ENCODE measurements at regions of chr12 and their contacts with region 1.

Region 1: GRCh38 chr12:133130038-133130807 is at the starts of genes ZNF10 and ZNF891:
- DNase-seq: peak; percentile 99
- ATAC-seq: peak; percentile 85
- H3K4me3 ChIP-seq: peak within 1 kb of the TSS; percentile 66 to 86 (median 77)
- H3K4me3 Mint-ChIP-seq: peak within 1 kb of the TSS; percentile 100
- H3K27ac ChIP-seq: peak within 1 kb of the TSS; percentile 98 to 99
- H3K27ac Mint-ChIP-seq: peak within 1 kb of the TSS; percentile 100
- H3K4me1 ChIP-seq: peaks cover 4 to 13% of the 10 kb centered on the region in 2 donors
- H3K4me1 Mint-ChIP-seq: peaks cover 18% of the 10 kb centered on the region
- H3K27me3 ChIP-seq: no peaks in the 10 kb centered on the region
- H3K27me3 Mint-ChIP-seq: no peaks in the 10 kb centered on the region
- CTCF ChIP-seq: no peak
- total RNA-seq, gene ZNF10: 20.0 and 20.9 TPM in 2 replicates
- total RNA-seq, gene ZNF891: 6.8 and 7.7 TPM in 2 replicates

Region 2: GRCh38 chr12:132771126-132771838 is 358.9 kb before region 1 on chr12:
- CTCF ChIA-PET with region 1: no interaction called
- POLR2A ChIA-PET with region 1: no interaction called
- intact Hi-C with region 1: loop called (anchors 5 kb)
- DNase-seq: peak; percentile 87
- ATAC-seq: peak; percentile 56
- H3K4me3 ChIP-seq: peak overlapping the region in 4 of 5 experiments; percentile 7 to 31 (median 16)
- H3K4me3 Mint-ChIP-seq: peak overlapping the region; percentile 69
- H3K27ac ChIP-seq: peak overlapping the region; percentile 87 to 89
- H3K27ac Mint-ChIP-seq: peak overlapping the region; percentile 88
- H3K4me1 ChIP-seq: peaks cover 60 to 76% of the 10 kb centered on the region in 2 donors
- H3K4me1 Mint-ChIP-seq: peaks cover 61% of the 10 kb centered on the region
- H3K27me3 ChIP-seq: no peaks in the 10 kb centered on the region
- H3K27me3 Mint-ChIP-seq: no peaks in the 10 kb centered on the region
- CTCF ChIP-seq: no peak

Region 3: DNA sequence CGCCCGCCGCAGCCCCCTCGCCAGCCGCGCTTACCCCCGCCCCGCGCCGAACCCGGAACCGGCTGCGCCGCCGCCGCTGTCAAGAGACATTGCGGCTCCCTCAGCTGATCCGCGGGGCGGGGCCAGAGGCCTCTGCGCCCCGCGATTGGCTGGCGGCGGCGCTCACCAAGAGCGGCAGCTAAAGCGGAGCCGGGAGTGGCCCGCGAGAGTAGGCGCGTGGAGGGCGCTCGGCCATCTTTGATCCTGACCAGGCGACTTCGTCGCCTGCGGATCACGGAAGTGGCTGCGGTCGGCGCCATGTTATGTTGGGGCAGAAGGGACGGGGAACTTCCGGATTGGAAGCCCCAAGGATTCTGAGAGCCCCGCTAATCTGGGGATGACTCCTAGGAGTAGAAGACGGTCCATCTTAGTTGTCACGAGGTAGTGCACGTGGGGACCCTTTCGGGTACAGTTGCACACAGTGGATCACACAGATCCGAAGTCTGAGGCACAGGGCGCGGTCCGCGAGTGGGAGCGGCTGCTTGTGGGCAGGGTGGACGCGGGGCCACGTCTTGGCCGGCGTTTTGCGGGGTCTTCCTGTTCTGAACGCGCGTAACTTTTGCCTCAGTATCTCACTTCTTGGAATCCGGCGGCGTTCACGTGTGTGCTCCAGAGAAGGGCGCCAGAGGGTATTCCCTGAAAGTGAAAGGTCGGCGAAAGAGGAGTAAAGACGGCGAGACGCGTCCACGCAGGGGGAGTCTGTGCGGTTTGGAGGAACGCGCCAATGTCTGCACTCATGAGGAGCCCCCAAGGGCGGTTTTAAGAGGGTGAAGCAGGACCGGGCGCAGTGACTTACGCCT is 242.5 kb before region 1 on chr12 and contains the start of gene CHFR:
- CTCF ChIA-PET with region 1: no interaction called
- POLR2A ChIA-PET with region 1: no interaction called
- intact Hi-C with region 1: loop called (anchors 1 kb)
- DNase-seq: peak; percentile 98
- ATAC-seq: peak; percentile 98
- H3K4me3 ChIP-seq: peak within 1 kb of the TSS; percentile 69 to 90 (median 77)
- H3K4me3 Mint-ChIP-seq: peak within 1 kb of the TSS; percentile 99
- H3K27ac ChIP-seq: peak within 1 kb of the TSS; percentile 92 to 98
- H3K27ac Mint-ChIP-seq: peak within 1 kb of the TSS; percentile 100
- H3K4me1 ChIP-seq: peaks cover 11 to 16% of the 10 kb centered on the region in 2 donors
- H3K4me1 Mint-ChIP-seq: peaks cover 30% of the 10 kb centered on the region
- H3K27me3 ChIP-seq: no peaks in the 10 kb centered on the region
- H3K27me3 Mint-ChIP-seq: peaks cover 6% of the 10 kb centered on the region
- CTCF ChIP-seq: no peak
- total RNA-seq, gene CHFR: 92.5 and 105 TPM in 2 replicates

Region 4: DNA sequence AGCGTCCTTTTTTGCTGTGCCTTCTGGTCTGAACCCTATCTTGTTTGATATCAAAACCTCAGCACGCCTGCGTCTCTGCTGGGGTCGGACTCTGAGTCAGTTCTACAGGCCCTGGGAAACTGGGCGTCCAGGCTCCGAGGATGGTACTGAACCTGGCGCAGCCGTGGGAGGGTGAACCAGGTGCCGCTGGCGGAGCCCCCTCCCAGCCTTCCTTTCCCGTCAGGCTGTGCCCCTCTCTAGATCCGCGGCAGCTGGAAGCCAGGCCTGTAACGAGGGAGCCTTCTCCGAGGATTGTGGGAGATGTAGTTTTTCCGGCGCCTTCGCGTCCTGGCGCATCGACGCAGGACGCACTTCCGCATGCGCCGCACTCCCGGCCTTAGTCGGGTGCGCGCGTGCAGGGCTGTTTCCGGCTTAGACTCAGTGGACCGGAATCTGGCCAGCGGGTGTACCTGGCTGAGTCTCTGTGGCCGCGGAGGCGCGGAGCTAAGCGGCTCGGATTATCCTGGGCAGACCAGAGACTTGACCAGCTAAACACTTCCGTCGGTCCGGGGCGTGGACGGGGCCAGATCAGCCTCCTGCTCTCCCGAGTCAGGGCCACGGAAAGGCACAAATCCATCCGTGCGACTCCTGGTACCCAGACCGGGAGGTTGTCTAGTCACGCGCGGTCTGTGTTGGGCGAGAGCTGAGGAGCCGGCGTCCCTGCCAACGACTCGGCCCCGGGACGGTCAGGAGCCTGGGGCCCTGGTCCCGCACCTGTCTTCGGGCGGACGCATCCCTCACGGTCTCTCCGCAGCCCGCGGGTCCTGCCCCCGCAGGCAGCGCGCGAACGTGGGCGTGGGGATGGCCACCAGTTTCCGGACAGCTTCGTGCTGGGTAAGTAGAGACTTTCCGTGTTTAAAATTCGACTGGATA is 144.0 kb before region 1 on chr12 and contains the start of gene ZNF26:
- CTCF ChIA-PET with region 1: no interaction called
- POLR2A ChIA-PET with region 1: interaction called, 4 read pairs
- intact Hi-C with region 1: loop called (anchors 1 kb)
- DNase-seq: peak; percentile 94
- ATAC-seq: peak; percentile 92
- H3K4me3 ChIP-seq: peak within 1 kb of the TSS; percentile 72 to 95 (median 89)
- H3K4me3 Mint-ChIP-seq: peak within 1 kb of the TSS; percentile 95
- H3K27ac ChIP-seq: peak within 1 kb of the TSS; percentile 75 to 83
- H3K27ac Mint-ChIP-seq: peak within 1 kb of the TSS; percentile 96
- H3K4me1 ChIP-seq: peaks cover 14 to 22% of the 10 kb centered on the region in 2 donors
- H3K4me1 Mint-ChIP-seq: peaks cover 27% of the 10 kb centered on the region
- H3K27me3 ChIP-seq: no peaks in the 10 kb centered on the region
- H3K27me3 Mint-ChIP-seq: no peaks in the 10 kb centered on the region
- CTCF ChIP-seq: no peak
- total RNA-seq, gene ZNF26: 36.0 and 41.5 TPM in 2 replicates

Region 5: DNA sequence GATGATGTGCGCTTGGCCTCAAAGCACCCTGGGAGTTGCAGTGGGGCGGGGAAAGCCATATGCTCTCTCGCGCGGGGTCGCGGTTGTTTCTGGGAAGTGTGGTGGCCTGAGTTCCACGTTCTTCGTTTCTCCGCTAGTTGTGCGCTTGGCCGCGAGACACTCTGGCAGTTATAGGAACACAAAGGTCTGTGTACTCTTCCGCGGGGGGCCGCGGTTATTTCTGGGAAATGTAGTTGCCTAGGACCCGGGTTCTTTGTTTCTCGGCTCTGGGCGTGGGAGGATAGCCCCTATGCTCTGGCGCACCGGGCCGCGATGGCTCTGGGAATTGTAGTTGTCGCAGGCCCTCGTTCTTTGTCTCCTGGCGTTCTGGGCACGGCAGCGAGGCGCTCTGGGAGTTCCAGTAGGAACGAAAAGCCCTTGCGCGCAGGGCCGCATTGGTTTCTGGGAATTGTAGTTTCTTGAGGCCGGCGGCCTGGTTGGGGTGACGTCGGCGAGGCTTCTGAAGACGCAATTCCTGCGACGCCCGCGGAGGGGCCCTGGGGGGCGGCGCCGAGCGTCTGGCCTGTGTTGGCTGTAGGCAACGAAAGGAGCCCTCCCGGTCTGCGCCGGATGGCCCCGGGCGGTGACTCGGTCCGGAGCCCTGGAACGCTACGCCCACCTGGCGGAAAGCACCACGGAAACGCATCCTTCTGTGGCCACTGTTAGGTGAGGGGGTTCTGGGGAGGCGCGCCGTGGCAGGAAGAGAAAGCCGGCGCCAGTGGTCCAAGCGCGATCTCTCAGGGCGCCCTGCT is 49.7 kb before region 1 on chr12 and contains the start of gene ZNF140:
- CTCF ChIA-PET with region 1: no interaction called
- POLR2A ChIA-PET with region 1: interaction called, 12 read pairs
- intact Hi-C with region 1: loop called (anchors 1 kb)
- DNase-seq: peak; percentile 99
- ATAC-seq: peak; percentile 63
- H3K4me3 ChIP-seq: peak within 1 kb of the TSS; percentile 63 to 95 (median 84)
- H3K4me3 Mint-ChIP-seq: no peak within 1 kb of the TSS
- H3K27ac ChIP-seq: peak within 1 kb of the TSS; percentile 99
- H3K27ac Mint-ChIP-seq: peak within 1 kb of the TSS; percentile 26
- H3K4me1 ChIP-seq: peaks cover 12 to 15% of the 10 kb centered on the region in 2 donors
- H3K4me1 Mint-ChIP-seq: peaks cover 8% of the 10 kb centered on the region
- H3K27me3 ChIP-seq: no peaks in the 10 kb centered on the region
- H3K27me3 Mint-ChIP-seq: no peaks in the 10 kb centered on the region
- CTCF ChIP-seq: peak; percentile 47
- total RNA-seq, gene ZNF140: 24.2 and 26.8 TPM in 2 replicates

Measured in B cell (primary cell).